ENCODE measurements at regions of chr6 and their contacts with region 1.

Region 1: DNA sequence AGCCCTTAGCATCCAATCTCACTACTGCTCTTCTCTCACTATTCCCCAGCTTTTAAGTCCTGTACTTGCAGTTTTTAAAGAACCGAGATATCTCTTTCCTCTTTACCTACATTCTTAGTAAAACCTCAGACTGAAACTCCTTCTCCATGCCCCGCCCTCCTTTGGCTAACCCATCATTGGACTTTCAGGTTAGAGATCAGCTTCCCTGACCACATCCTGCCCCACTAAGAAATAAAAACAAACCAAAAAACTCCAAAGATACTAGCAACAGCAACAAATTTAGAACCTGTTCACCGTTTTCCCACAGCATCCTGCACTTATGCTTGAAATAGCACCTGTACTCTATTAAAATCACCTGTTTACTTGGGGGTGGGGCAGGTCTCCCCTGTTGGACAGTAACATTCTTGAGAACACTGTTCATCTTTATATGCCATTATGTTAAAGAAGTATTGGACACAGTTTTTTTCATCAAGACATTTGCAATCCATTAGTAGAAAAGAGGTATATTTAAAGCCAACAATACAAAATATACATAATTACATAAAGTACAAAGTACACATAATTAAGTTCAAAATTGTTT is 16.3 kb upstream of the SMAP1 start:
- DNase-seq: peak in 8 of 9 donors; percentile 24 to 68 (median 58)
- ATAC-seq: peak; percentile 82
- H3K4me3 ChIP-seq: peak overlapping the region; percentile 18
- H3K4me3 Mint-ChIP-seq: peak overlapping the region; percentile 25 to 75 (median 58)
- H3K27ac ChIP-seq: peak overlapping the region; percentile 6
- H3K27ac Mint-ChIP-seq: peak overlapping the region; percentile 32 to 84 (median 76)
- H3K4me1 ChIP-seq: peaks cover 21 to 22% of the 10 kb centered on the region in 2 donors
- H3K4me1 Mint-ChIP-seq: peaks cover 13 to 52% (median 25%) of the 10 kb centered on the region in 7 donors
- H3K27me3 ChIP-seq: no peaks in the 10 kb centered on the region
- H3K27me3 Mint-ChIP-seq: no peaks in the 10 kb centered on the region

Region 2: GRCh38 chr6:70604254-70604653 is 47.2 kb before region 1 on chr6:
- CTCF ChIA-PET with region 1: no interaction called
- POLR2A ChIA-PET with region 1: no interaction called
- intact Hi-C with region 1: loop called in 1 of 2 experiments (anchors 1 kb)
- DNase-seq: no peak
- ATAC-seq: no peak
- H3K4me3 ChIP-seq: no peak overlapping the region
- H3K4me3 Mint-ChIP-seq: no peak overlapping the region
- H3K27ac ChIP-seq: no peak overlapping the region
- H3K27ac Mint-ChIP-seq: no peak overlapping the region
- H3K4me1 ChIP-seq: no peaks in the 10 kb centered on the region
- H3K4me1 Mint-ChIP-seq: peaks cover 0 to 39% (median 17%) of the 10 kb centered on the region in 7 donors
- H3K27me3 ChIP-seq: no peaks in the 10 kb centered on the region
- H3K27me3 Mint-ChIP-seq: peaks cover 0 to 5% (median 0%) of the 10 kb centered on the region in 5 donors

Measured in naive thymus-derived CD4-positive, alpha-beta T cell (primary cell).